Upper lobe of right lung (tissue), 1 donor: ENCODE measurements at regions of chr17 and their contacts with region 1.

Region 1: GRCh38 chr17:78501241-78502036 is 75.8 kb downstream of the DNAH17 start:
- DNase-seq: peak; percentile 60
- ATAC-seq: no peak
- H3K4me3 ChIP-seq: no peak overlapping the region
- H3K27ac ChIP-seq: no peak overlapping the region
- H3K4me1 ChIP-seq: no peaks in the 10 kb centered on the region
- H3K27me3 ChIP-seq: no peaks in the 10 kb centered on the region
- CTCF ChIP-seq: no peak

Region 2: GRCh38 chr17:78313735-78314648 is 187.4 kb before region 1 on chr17:
- intact Hi-C with region 1: no loop called
- DNase-seq: peak; percentile 94
- ATAC-seq: peak; percentile 86
- H3K4me3 ChIP-seq: peak overlapping the region; percentile 49
- H3K27ac ChIP-seq: peak overlapping the region; percentile 80
- H3K4me1 ChIP-seq: peaks cover 47% of the 10 kb centered on the region
- H3K27me3 ChIP-seq: no peaks in the 10 kb centered on the region
- CTCF ChIP-seq: no peak

Region 3: DNA sequence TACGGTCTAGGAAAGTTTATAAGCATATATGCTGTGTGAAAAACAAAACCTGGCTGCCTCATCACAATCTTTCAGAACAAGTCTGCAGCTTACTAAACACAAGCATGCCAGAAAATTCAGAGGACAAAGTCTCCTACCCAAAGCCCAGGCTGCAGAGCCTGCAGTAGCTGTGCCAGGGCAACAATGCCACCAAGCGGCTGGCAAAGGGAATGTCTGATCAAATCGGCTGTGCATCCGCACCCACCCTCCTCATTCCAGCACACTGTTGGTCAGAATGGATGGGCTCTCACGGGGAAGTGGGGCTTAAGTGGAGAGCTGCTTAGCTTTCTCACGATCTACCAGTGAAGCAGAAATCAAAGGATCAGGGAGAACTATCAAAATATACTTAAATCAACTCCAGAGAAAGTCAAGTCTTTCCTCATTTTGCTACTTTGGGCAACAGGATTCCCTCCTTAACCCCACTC is 207.1 kb after region 1 on chr17:
- intact Hi-C with region 1: loop called (anchors 10 kb)
- DNase-seq: peak; percentile 76
- ATAC-seq: peak; percentile 95
- H3K4me3 ChIP-seq: no peak overlapping the region
- H3K27ac ChIP-seq: no peak overlapping the region
- H3K4me1 ChIP-seq: peaks cover 32% of the 10 kb centered on the region
- H3K27me3 ChIP-seq: no peaks in the 10 kb centered on the region
- CTCF ChIP-seq: peak; percentile 84

Region 4: GRCh38 chr17:79231766-79232287 is 730.4 kb after region 1 on chr17:
- intact Hi-C with region 1: no loop called
- DNase-seq: no peak
- ATAC-seq: no peak
- H3K4me3 ChIP-seq: no peak overlapping the region
- H3K27ac ChIP-seq: no peak overlapping the region
- H3K4me1 ChIP-seq: no peaks in the 10 kb centered on the region
- H3K27me3 ChIP-seq: peaks cover 7% of the 10 kb centered on the region
- CTCF ChIP-seq: no peak